Caco-2 (cell line): ENCODE measurements at regions of chr2 and their contacts with region 1.

Region 1: DNA sequence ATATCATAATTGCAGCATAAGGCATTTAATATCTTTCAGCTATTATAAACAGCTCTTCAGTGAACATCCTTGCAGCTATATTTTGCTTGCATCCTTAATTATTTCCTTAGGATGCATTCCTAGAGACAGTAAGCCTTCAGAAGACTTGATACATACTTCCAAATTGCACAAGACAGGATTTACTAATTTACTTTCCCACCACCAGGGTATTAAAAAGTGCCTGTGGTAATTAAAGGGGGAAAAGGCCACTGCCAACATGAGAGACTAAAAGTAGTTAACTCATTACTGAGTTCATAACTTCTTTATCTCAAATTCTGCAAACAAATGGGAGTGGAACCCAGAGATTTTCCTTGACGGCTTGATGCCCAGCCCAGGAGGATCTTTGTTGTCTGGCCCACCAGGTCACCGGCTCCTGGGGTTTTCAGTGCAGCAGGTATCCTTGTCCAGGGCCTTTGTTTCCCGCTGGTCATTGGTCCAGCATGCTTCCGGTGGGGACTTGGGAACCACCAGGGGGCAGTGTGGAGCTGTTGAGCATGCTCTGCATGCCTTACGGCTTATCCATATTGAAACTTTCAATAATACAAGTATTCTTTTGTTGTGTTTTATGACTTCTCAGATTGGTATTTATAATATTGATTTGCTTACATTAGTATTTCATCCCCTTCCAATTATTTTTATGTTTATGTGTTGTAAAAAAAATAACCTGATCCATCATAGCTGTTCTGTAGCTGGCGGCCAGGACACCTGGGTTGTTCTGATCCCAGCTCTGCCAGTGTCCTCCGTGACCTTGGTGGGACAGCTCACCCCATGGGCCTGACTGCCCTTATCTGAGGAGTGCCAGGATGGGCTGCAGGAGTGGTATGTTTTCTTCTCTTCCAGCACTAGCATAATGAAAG is 61.4 kb downstream of the TGOLN2 start:
- DNase-seq: peak; percentile 79 to 85
- H3K4me3 ChIP-seq: no peak overlapping the region
- H3K4me3 Mint-ChIP-seq: no peak overlapping the region
- H3K27ac Mint-ChIP-seq: no peak overlapping the region
- H3K4me1 ChIP-seq: peaks cover 57% of the 10 kb centered on the region
- H3K4me1 Mint-ChIP-seq: peaks cover 55% of the 10 kb centered on the region
- H3K27me3 ChIP-seq: no peaks in the 10 kb centered on the region
- H3K27me3 Mint-ChIP-seq: no peaks in the 10 kb centered on the region
- CTCF ChIP-seq: peak; percentile 87 to 96

Region 2: GRCh38 chr2:85255813-85256594 is 10.4 kb before region 1 on chr2:
- CTCF ChIA-PET with region 1: interaction called, 9 read pairs
- POLR2A ChIA-PET with region 1: interaction called, 3 read pairs
- intact Hi-C with region 1: loop called (anchors 1 kb)
- DNase-seq: peak; percentile 92 to 95
- H3K4me3 ChIP-seq: peak overlapping the region; percentile 29
- H3K4me3 Mint-ChIP-seq: peak overlapping the region; percentile 83
- H3K27ac Mint-ChIP-seq: peak overlapping the region; percentile 97
- H3K4me1 ChIP-seq: peaks cover 78% of the 10 kb centered on the region
- H3K4me1 Mint-ChIP-seq: peaks cover 80% of the 10 kb centered on the region
- H3K27me3 ChIP-seq: no peaks in the 10 kb centered on the region
- H3K27me3 Mint-ChIP-seq: no peaks in the 10 kb centered on the region
- CTCF ChIP-seq: no peak

Region 3: GRCh38 chr2:85288244-85288725 is 21.9 kb after region 1 on chr2:
- CTCF ChIA-PET with region 1: interaction called, 4 read pairs
- POLR2A ChIA-PET with region 1: no interaction called
- intact Hi-C with region 1: loop called (anchors 1 kb)
- DNase-seq: peak; percentile 55 to 61
- H3K4me3 ChIP-seq: no peak overlapping the region
- H3K4me3 Mint-ChIP-seq: peak overlapping the region; percentile 10
- H3K27ac Mint-ChIP-seq: peak overlapping the region; percentile 63
- H3K4me1 ChIP-seq: peaks cover 16% of the 10 kb centered on the region
- H3K4me1 Mint-ChIP-seq: peaks cover 24% of the 10 kb centered on the region
- H3K27me3 ChIP-seq: no peaks in the 10 kb centered on the region
- H3K27me3 Mint-ChIP-seq: no peaks in the 10 kb centered on the region
- CTCF ChIP-seq: no peak

Region 4: DNA sequence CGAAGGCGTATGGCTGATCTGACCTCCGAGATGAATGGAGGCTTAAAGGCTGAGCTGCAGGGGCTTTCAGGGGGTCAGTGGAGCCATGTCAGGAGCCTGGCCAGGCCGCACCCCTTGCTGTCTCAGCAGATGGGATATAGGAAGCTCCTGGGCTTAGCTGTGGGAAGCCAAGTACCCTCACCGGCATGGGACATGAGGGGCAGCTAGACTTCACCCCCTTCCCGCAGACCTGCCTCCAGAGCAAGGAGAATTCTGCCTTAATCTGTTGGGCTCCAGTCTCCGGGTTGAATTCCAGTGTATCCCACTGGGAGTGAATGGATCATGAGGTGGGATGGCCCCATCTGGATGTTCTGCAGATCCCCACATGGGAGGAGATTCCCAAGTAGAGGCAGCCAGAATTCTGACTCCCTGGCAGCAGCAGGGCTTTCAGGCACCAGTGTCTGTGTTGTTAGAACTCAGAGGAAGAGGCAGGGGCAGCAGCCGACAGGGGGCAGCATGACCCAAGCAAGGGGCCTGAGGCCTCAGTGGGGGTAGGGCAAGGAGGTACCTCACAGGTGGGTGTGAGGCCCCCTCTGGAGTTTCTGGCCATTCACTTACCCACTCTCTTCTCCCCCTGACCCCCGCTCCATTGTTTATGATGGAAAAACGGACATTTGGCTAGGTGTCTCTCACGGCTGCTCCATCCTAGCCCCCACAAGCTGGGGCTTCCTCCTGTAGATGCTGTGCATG is 124.7 kb after region 1 on chr2:
- CTCF ChIA-PET with region 1: no interaction called
- POLR2A ChIA-PET with region 1: no interaction called
- intact Hi-C with region 1: no loop called
- DNase-seq: peak; percentile 39 to 48
- H3K4me3 ChIP-seq: no peak overlapping the region
- H3K4me3 Mint-ChIP-seq: no peak overlapping the region
- H3K27ac Mint-ChIP-seq: no peak overlapping the region
- H3K4me1 ChIP-seq: no peaks in the 10 kb centered on the region
- H3K4me1 Mint-ChIP-seq: no peaks in the 10 kb centered on the region
- H3K27me3 ChIP-seq: no peaks in the 10 kb centered on the region
- H3K27me3 Mint-ChIP-seq: no peaks in the 10 kb centered on the region
- CTCF ChIP-seq: peak in 1 of 2 experiments; percentile 55